ENCODE measurements at regions of chr2 and their contacts with region 1.

Region 1: DNA sequence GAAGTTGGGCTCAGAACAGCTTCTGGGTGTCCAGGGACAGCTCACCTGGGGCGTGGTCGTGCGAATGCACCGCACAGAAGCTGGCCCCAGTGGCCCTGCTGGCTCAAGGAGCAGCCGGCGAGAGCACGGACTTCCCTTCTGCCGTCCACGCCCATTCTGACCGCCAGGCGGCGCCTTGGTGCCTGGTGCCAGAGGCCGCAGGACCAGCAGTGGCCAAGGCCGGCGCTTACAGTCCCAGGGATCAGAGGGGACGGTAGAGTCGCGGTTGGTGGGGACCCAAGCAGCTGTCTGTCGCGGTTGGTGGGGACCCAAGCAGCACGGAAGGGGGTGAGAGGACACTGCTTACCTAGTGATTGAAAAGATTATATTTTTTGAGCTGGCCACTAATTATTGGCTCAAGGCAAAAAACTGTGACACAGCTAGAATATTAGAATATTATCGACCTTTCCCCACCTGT is 25.7 kb downstream of the NPPC start:
- DNase-seq: peak; percentile 77 to 86 (median 78)
- ATAC-seq: peak; percentile 99
- H3K4me3 ChIP-seq: no peak overlapping the region
- H3K27ac ChIP-seq: no peak overlapping the region
- H3K4me1 ChIP-seq: peaks cover 0 to 14% of the 10 kb centered on the region in 2 experiments; a peak in 2 of 5 replicates
- H3K27me3 ChIP-seq: peaks cover 0 to 8% of the 10 kb centered on the region in 2 experiments; a peak in 2 of 5 replicates
- CTCF ChIP-seq: peak; percentile 79 to 97 (median 82)
- EP300 ChIP-seq: no peak
- POLR2A ChIP-seq: no peak
- RAD21 ChIP-seq: peak; percentile 53 to 74

Region 2: GRCh38 chr2:231854671-231855070 is 45.8 kb before region 1 on chr2:
- CTCF ChIA-PET with region 1: no interaction called
- POLR2A ChIA-PET with region 1: no interaction called
- in situ Hi-C with region 1: no loop called
- intact Hi-C with region 1: loop called (anchors 10 kb)
- DNase-seq: no peak
- ATAC-seq: no peak
- H3K4me3 ChIP-seq: no peak overlapping the region
- H3K27ac ChIP-seq: no peak overlapping the region
- H3K4me1 ChIP-seq: no peaks in the 10 kb centered on the region
- H3K27me3 ChIP-seq: peaks cover 3 to 28% of the 10 kb centered on the region in 2 experiments; a peak in 3 of 5 replicates
- CTCF ChIP-seq: no peak
- EP300 ChIP-seq: no peak
- POLR2A ChIP-seq: no peak
- RAD21 ChIP-seq: no peak

Region 3: GRCh38 chr2:232142049-232142448 is 241.5 kb after region 1 on chr2:
- CTCF ChIA-PET with region 1: interaction called, 9 read pairs
- POLR2A ChIA-PET with region 1: no interaction called
- in situ Hi-C with region 1: loop called (anchors 5 kb)
- intact Hi-C with region 1: no loop called
- DNase-seq: peak; percentile 20 to 44 (median 30)
- ATAC-seq: peak; percentile 84
- H3K4me3 ChIP-seq: no peak overlapping the region
- H3K27ac ChIP-seq: no peak overlapping the region
- H3K4me1 ChIP-seq: no peaks in the 10 kb centered on the region; a peak in 1 of 5 replicates
- H3K27me3 ChIP-seq: no peaks in the 10 kb centered on the region
- CTCF ChIP-seq: peak; percentile 63 to 73 (median 64)
- EP300 ChIP-seq: no peak
- POLR2A ChIP-seq: no peak
- RAD21 ChIP-seq: peak; percentile 78 to 81

Region 4: DNA sequence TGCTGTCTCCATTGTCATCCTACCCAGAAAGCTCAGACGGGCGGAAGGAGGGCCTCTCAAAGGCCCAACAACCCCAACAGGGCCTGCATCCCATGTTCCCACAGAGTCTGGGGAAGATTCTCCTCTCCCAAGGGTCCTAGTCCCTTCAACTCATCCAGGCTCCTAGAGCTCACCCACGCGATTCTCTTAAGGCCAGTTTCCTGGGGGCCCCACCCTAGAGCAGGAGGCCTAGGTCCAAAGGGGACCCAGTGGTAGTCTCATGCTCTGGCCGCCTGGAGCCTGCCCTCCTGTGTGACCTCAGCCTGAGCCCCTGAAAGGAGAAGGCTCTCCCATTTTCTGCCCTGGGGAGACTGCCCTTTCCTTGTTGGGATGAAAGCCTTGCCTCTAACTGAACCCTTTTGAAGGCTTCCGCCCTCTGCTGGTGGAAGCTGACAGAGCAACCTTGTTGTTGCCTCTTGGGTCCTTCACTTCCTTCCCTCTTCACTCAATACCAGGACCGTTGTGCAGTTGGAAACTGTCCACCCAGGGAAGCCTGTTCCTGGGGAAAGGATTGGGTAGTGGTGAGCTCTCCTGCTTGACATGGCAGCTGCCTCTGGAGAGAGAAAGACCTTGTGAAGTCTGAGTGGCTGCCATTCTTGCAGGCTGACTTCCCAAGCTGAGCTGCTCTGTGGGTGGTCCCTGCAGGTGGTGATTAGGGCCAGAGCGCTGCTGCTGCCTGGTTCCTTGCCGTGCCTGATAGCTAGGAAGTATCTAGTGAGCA is 392.1 kb after region 1 on chr2:
- CTCF ChIA-PET with region 1: interaction called, 3 read pairs
- POLR2A ChIA-PET with region 1: no interaction called
- in situ Hi-C with region 1: loop called (anchors 10 kb)
- intact Hi-C with region 1: no loop called
- DNase-seq: peak; percentile 43 to 68 (median 56)
- ATAC-seq: peak; percentile 95
- H3K4me3 ChIP-seq: no peak overlapping the region
- H3K27ac ChIP-seq: no peak overlapping the region
- H3K4me1 ChIP-seq: no peaks in the 10 kb centered on the region
- H3K27me3 ChIP-seq: no peaks in the 10 kb centered on the region
- CTCF ChIP-seq: peak; percentile 61 to 83 (median 71)
- EP300 ChIP-seq: no peak
- POLR2A ChIP-seq: no peak
- RAD21 ChIP-seq: peak in 1 of 2 experiments; percentile 55; a peak in 2 of 4 replicates

Region 5: DNA sequence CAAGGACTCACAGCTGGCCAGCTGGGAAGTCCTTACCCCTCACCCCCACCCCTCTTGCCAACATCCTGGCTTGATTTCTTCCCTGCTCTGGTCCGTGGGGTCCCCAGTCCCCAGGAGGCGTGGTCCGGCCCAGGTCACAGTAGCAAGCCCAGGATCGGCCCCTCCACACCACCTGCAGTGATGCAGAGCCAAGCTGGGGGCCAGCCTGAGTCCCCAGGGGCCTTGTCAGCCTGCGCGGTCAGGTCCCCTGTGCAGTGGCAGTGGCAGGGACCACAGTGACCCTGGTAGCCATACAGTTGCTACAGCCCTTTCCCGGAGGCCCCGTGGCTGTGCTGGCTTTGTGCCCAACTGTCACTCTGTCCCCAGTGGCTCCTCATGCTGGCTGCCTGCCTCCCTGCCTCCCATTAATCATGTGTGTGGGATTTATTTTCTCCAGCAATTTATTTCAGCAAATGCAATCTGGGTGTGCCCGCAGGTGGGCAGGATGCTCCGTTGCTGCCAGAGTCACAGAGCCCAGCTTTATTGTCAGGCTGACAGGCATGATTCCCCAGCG is 610.9 kb after region 1 on chr2:
- CTCF ChIA-PET with region 1: no interaction called
- POLR2A ChIA-PET with region 1: no interaction called
- in situ Hi-C with region 1: loop called (anchors 10 kb)
- intact Hi-C with region 1: no loop called
- DNase-seq: no peak
- ATAC-seq: no peak
- H3K4me3 ChIP-seq: no peak overlapping the region
- H3K27ac ChIP-seq: no peak overlapping the region
- H3K4me1 ChIP-seq: no peaks in the 10 kb centered on the region
- H3K27me3 ChIP-seq: peaks cover 0 to 52% of the 10 kb centered on the region in 2 experiments; a peak in 2 of 5 replicates
- CTCF ChIP-seq: no peak
- EP300 ChIP-seq: no peak
- POLR2A ChIP-seq: no peak
- RAD21 ChIP-seq: no peak

Measured in K562 (cell line).